HepG2 (cell line): ENCODE measurements at regions of chr11 and their contacts with region 1.

Region 1: DNA sequence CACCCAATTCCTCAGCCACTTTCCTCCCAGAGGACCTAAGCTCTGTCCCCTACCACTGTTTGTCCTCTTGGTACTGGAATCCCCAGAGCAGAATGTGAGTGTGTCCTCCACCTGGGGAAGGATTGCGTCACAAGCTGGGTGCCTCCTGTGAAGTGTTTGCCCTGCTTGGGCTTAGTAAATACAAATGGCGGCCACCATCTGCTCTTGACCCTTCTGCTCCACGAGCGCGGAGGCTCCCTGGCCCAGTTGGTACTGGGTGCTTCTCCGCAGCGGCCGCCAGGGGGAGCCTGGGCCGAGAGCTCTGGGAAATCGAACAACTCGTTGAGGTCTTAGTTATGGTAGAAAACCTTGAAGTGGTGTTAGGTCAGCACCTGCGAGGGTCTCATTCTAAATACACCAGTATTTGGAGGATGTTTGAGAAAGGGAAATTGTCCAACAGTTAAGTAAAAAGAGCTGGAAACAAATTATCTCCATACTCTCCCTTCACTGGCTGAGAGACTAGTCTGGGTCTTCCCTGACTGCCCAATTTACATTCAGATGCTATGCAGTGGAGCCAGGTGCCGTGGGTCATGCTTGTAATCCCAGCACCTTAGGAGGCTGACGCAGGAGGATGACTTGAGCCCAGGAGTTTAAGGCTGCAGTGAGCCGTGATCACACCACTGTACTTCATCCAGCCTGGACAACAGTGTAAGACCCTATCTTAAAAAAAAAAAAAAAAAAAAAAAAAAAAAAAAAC is 74.6 kb upstream of the TEAD1 start:
- DNase-seq: peak; percentile 91
- ATAC-seq: peak; percentile 99
- H3K4me3 ChIP-seq: no peak overlapping the region
- H3K27ac ChIP-seq: no peak overlapping the region
- H3K4me1 ChIP-seq: peaks cover 26% of the 10 kb centered on the region
- H3K27me3 ChIP-seq: no peaks in the 10 kb centered on the region
- CTCF ChIP-seq: peak; percentile 96
- EP300 ChIP-seq: peak in 1 of 2 experiments; percentile 55; a peak in 2 of 4 replicates
- POLR2A ChIP-seq: no peak
- RAD21 ChIP-seq: peak; percentile 89

Region 2: DNA sequence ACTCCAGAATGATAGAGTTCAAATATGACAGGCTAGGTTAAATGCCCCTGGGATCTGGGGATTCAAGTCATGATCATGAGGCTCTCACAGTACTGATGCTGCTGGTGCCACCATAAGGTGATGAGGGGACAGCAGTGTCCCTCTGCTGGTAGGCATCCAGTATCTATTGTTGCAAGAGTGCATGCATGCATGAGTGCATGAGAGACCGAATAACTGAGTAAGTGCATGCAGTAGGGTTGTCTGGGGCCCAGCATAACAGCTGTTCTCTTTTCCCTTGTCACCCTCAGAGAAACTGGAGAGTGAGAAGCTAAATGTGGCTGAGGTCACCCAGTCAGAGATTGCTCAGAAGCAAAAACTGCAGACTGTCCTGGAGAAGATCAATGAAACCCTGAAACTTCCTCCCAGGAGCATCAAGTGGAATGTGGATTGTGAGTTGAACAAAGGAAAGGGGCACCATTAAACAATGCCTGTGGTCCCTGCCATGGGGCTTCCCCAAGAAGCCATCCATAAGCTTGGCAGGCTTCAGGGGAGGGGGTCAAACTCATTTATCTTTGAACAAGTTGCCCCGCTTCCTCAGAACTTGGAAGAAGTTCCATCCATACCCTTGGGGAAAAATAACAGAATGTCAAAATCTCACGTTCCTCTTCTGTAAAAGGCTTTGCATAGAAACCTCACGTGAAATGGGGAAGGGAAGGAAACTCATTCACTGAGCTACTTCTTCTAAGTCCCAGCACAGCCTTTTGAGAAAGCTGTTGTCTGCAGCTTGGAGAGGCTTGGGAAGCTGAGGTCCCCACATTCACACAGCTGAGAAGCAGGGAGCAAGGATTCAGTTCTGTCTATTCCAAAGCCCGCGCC is 103.2 kb before region 1 on chr11:
- CTCF ChIA-PET with region 1: no interaction called
- POLR2A ChIA-PET with region 1: no interaction called
- in situ Hi-C with region 1: loop called (anchors 25 kb)
- intact Hi-C with region 1: no loop called
- DNase-seq: peak; percentile 20
- ATAC-seq: peak; percentile 83
- H3K4me3 ChIP-seq: no peak overlapping the region
- H3K27ac ChIP-seq: no peak overlapping the region
- H3K4me1 ChIP-seq: no peaks in the 10 kb centered on the region
- H3K27me3 ChIP-seq: no peaks in the 10 kb centered on the region
- CTCF ChIP-seq: peak; percentile 22; the same call in 1 of the 2 replicates
- EP300 ChIP-seq: no peak; a peak in 1 of 4 replicates
- POLR2A ChIP-seq: no peak
- RAD21 ChIP-seq: no peak

Region 3: GRCh38 chr11:12540913-12541582 is 58.5 kb before region 1 on chr11:
- CTCF ChIA-PET with region 1: no interaction called
- POLR2A ChIA-PET with region 1: no interaction called
- in situ Hi-C with region 1: no loop called
- intact Hi-C with region 1: no loop called
- DNase-seq: no peak
- ATAC-seq: peak; percentile 29; the same call in 2 of the 3 replicates
- H3K4me3 ChIP-seq: no peak overlapping the region
- H3K27ac ChIP-seq: no peak overlapping the region
- H3K4me1 ChIP-seq: no peaks in the 10 kb centered on the region
- H3K27me3 ChIP-seq: peaks cover 0 to 7% of the 10 kb centered on the region in 2 experiments; a peak in 1 of 5 replicates
- CTCF ChIP-seq: no peak
- EP300 ChIP-seq: no peak
- POLR2A ChIP-seq: no peak
- RAD21 ChIP-seq: no peak

Region 4: DNA sequence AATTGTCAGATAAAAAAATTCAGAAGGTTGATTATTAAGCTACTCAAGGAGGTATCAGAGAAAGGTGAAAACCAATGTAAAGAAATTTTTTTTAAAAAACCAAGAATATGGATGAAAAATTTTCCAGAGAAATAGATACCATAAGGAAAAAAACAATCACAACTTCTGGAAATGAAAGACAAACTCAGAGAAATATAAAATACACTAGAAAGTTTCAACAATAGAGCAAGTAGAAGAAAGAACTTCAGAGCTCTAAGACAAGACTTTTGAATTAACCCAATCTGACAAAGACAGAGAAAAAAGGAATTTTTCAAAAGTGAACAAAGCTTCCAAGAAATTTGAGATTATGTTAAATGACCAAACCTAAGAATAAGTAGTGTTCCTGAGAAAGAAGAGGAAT is 11.8 kb after region 1 on chr11:
- CTCF ChIA-PET with region 1: no interaction called
- POLR2A ChIA-PET with region 1: no interaction called
- in situ Hi-C with region 1: no loop called
- intact Hi-C with region 1: no loop called
- DNase-seq: no peak
- ATAC-seq: no peak
- H3K4me3 ChIP-seq: no peak overlapping the region
- H3K27ac ChIP-seq: no peak overlapping the region
- H3K4me1 ChIP-seq: no peaks in the 10 kb centered on the region
- H3K27me3 ChIP-seq: no peaks in the 10 kb centered on the region
- CTCF ChIP-seq: no peak
- EP300 ChIP-seq: no peak
- POLR2A ChIP-seq: no peak
- RAD21 ChIP-seq: no peak

Region 5: DNA sequence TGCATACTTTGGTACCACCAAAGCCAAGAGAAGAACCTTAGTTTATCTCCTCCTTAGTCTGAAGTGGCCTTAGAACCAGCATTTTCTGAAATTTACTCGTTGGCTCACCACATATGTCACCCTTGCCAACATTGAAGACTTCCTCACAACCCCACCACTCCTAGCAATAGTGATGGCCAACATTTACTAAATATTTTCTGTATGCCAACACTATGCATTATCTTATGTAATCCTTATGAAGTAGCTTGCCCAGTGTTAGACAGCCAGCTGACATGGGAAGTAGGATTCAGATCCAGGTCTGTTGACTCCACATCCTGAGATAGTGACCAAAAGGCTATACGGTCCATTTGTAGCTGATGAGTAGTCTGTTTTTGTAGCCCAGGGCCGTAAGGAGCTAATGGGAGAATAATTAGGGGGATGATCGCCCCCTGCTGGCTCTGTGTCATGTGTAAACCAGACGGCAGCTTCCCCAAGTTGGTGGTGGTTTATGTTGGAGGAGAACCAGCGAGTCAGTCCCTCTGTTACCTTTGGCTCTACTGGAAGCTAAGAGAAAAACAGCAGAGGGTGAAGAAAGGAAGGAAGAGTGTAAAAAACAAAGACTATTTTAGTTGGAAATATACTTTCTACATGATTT is 289.1 kb after region 1 on chr11:
- CTCF ChIA-PET with region 1: interaction called, 20 read pairs
- POLR2A ChIA-PET with region 1: interaction called, 6 read pairs
- in situ Hi-C with region 1: loop called (anchors 5 kb)
- intact Hi-C with region 1: loop called (anchors 1 kb)
- DNase-seq: peak; percentile 71
- ATAC-seq: peak; percentile 90
- H3K4me3 ChIP-seq: no peak overlapping the region
- H3K27ac ChIP-seq: no peak overlapping the region
- H3K4me1 ChIP-seq: no peaks in the 10 kb centered on the region
- H3K27me3 ChIP-seq: no peaks in the 10 kb centered on the region
- CTCF ChIP-seq: peak; percentile 88
- EP300 ChIP-seq: no peak
- POLR2A ChIP-seq: no peak
- RAD21 ChIP-seq: peak; percentile 89

Region 6: DNA sequence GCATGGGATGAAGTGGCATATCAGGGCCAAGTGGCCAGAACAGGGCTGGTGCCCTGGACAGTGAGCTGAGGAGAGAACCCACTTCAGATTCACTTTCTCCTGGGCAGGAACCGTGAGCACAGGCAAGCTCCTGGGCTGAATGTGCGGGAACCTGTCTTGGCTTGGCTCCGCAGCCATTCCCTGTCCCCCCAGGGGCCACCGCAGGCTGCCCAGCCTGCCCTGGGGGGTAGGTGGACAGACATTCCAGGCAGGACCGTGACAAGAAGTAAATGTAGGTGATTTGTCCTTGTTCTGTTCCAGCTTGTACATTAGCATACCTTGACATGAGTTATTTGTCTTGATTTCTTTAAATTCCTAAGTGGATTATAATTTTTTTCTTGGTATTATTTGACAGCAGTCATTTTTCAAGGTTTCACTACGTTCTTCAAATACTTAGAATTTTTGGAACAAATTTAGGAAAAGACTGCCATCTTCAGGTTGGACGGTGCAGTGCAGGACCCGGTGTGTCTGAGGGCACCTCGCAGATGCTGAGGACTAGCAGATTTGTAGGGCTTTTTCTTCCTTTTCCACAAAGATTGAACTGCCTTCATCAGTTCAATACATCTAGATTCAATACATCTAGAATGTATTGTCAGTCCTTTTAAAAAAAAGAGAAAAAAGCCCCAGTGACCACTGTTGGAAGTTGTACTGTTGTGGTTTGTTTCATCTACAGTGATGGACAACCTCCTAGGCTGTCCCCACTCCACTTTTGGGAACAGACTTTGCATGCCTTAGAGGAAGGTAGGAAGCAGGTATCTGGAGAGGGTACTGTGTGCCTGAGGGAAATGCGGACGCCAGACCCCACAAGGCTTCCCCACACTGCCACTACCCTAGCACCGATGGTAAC is 294.5 kb after region 1 on chr11:
- CTCF ChIA-PET with region 1: interaction called, 20 read pairs
- POLR2A ChIA-PET with region 1: interaction called, 6 read pairs
- in situ Hi-C with region 1: loop called (anchors 5 kb)
- intact Hi-C with region 1: loop called (anchors 1 kb)
- DNase-seq: peak; percentile 39
- ATAC-seq: peak; percentile 82
- H3K4me3 ChIP-seq: no peak overlapping the region
- H3K27ac ChIP-seq: no peak overlapping the region
- H3K4me1 ChIP-seq: no peaks in the 10 kb centered on the region
- H3K27me3 ChIP-seq: no peaks in the 10 kb centered on the region
- CTCF ChIP-seq: peak; percentile 68
- EP300 ChIP-seq: no peak
- POLR2A ChIP-seq: no peak
- RAD21 ChIP-seq: peak; percentile 64; the same call in 1 of the 2 replicates